Activated CD8-positive, alpha-beta T cell treated with anti-CD3 and anti-CD28 coated beads, Interleukin-2, amount 10 ng/mL, durations not matched to agents 7 days and 5 days (primary cell): ENCODE measurements at regions of chr2 and their contacts with region 1.

Region 1: GRCh38 chr2:219155054-219155644 is 5.5 kb downstream of the NHEJ1 start:
- DNase-seq: peak; percentile 53
- ATAC-seq: no peak
- H3K4me3 Mint-ChIP-seq: no peak overlapping the region
- H3K27ac Mint-ChIP-seq: no peak overlapping the region
- H3K4me1 Mint-ChIP-seq: peaks cover 12% of the 10 kb centered on the region
- H3K27me3 Mint-ChIP-seq: no peaks in the 10 kb centered on the region

Region 2: DNA sequence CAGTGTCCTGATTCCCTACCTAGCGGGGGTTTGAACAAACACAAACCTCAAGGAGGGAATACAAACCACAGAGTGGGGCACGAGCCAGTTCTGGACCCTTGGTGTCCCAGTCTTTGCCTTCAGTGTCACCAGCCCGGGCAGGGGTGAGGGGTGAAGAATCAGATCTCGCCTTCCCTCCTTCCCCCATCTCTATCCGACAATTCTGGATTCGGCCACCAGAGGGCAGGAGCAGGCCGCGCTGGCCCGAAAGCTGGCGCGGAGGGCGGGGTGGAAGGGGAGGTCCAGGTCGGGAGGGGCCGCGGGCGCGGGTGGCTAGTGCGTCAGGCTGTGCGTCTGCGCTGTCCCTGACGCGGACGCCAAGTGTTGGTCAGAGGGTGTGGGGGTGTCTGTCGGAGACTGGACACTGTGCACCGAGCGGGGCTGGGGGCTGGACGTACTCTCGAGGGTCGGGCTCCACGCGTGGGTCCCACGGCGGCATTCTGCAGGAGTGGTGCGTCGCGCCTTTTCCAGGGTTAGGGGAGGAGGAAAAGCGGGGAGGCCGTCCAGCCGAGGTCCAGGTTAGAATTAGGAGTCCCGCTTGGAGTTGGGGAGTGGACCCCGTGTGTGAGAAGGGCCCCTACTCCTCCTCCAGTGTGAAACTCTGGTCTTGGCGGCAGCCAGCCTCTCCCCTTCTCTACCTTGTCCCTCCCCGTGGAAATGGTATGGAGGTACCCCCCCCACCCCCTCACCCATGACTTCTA is 159.0 kb before region 1 on chr2:
- CTCF ChIA-PET with region 1: interaction called, 11 read pairs
- POLR2A ChIA-PET with region 1: no interaction called
- DNase-seq: peak; percentile 81
- ATAC-seq: peak; percentile 61
- H3K4me3 Mint-ChIP-seq: no peak overlapping the region
- H3K27ac Mint-ChIP-seq: no peak overlapping the region
- H3K4me1 Mint-ChIP-seq: peaks cover 8% of the 10 kb centered on the region
- H3K27me3 Mint-ChIP-seq: peaks cover 83% of the 10 kb centered on the region

Region 3: GRCh38 chr2:219029829-219030165 is 125.4 kb before region 1 on chr2:
- CTCF ChIA-PET with region 1: interaction called, 29 read pairs
- POLR2A ChIA-PET with region 1: no interaction called
- DNase-seq: peak; percentile 82
- ATAC-seq: peak; percentile 91
- H3K4me3 Mint-ChIP-seq: no peak overlapping the region
- H3K27ac Mint-ChIP-seq: no peak overlapping the region
- H3K4me1 Mint-ChIP-seq: no peaks in the 10 kb centered on the region
- H3K27me3 Mint-ChIP-seq: peaks cover 22% of the 10 kb centered on the region

Region 4: GRCh38 chr2:219041252-219041651 is 113.9 kb before region 1 on chr2 and contains the start of gene CFAP65:
- CTCF ChIA-PET with region 1: interaction called, 11 read pairs
- POLR2A ChIA-PET with region 1: no interaction called
- DNase-seq: peak; percentile 39
- ATAC-seq: no peak
- H3K4me3 Mint-ChIP-seq: peak within 1 kb of the TSS; percentile 22
- H3K27ac Mint-ChIP-seq: no peak within 1 kb of the TSS
- H3K4me1 Mint-ChIP-seq: peaks cover 9% of the 10 kb centered on the region
- H3K27me3 Mint-ChIP-seq: peaks cover 44% of the 10 kb centered on the region
- total RNA-seq, gene CFAP65: not detected

Region 5: DNA sequence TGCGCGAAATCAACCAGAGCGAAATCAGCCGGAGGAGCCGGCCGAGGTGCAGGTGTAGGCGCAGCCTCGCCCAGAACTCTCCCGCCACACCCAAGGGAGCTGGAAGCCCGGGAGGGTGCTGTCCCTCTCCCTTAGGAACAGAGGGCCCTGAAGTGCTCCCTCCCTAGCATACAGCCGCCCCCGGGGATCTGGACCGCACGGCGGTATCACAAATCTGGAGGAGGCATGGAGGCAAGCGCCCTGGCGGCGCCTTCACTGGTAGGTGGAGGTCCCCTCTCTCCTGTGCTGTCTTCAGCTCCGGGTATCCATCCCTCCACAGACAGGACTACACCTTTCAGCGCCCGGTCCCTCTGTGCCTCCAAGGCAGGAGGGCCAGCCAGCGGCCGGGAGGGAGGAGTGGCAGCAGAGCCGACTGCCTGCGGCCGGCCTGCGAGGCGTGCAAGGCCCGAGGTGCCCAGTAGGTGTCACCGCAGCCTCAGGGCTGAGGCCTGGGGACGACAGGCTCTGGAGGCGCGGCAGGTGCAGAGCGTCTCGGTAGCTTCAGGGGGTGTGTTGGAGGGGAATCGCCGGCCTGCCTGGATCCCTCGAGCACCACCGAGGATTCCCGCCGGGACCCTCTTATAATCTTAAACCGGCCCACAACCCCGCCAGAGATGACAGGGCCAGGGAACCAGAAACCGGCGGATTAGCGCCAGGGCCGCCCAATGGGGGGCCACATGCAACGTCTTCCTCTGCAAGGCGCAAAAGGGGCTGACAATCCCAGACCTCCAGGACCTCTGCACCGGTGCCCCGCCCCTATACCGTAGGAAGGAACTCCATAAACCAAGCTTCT is 97.2 kb before region 1 on chr2:
- CTCF ChIA-PET with region 1: interaction called, 47 read pairs
- POLR2A ChIA-PET with region 1: no interaction called
- DNase-seq: peak; percentile 82
- ATAC-seq: peak; percentile 92
- H3K4me3 Mint-ChIP-seq: peak overlapping the region; percentile 42
- H3K27ac Mint-ChIP-seq: no peak overlapping the region
- H3K4me1 Mint-ChIP-seq: peaks cover 21% of the 10 kb centered on the region
- H3K27me3 Mint-ChIP-seq: peaks cover 62% of the 10 kb centered on the region

Region 6: GRCh38 chr2:219095406-219095935 is 59.7 kb before region 1 on chr2:
- CTCF ChIA-PET with region 1: no interaction called
- POLR2A ChIA-PET with region 1: no interaction called
- DNase-seq: no peak
- ATAC-seq: no peak
- H3K4me3 Mint-ChIP-seq: no peak overlapping the region
- H3K27ac Mint-ChIP-seq: no peak overlapping the region
- H3K4me1 Mint-ChIP-seq: no peaks in the 10 kb centered on the region
- H3K27me3 Mint-ChIP-seq: no peaks in the 10 kb centered on the region

Region 7: DNA sequence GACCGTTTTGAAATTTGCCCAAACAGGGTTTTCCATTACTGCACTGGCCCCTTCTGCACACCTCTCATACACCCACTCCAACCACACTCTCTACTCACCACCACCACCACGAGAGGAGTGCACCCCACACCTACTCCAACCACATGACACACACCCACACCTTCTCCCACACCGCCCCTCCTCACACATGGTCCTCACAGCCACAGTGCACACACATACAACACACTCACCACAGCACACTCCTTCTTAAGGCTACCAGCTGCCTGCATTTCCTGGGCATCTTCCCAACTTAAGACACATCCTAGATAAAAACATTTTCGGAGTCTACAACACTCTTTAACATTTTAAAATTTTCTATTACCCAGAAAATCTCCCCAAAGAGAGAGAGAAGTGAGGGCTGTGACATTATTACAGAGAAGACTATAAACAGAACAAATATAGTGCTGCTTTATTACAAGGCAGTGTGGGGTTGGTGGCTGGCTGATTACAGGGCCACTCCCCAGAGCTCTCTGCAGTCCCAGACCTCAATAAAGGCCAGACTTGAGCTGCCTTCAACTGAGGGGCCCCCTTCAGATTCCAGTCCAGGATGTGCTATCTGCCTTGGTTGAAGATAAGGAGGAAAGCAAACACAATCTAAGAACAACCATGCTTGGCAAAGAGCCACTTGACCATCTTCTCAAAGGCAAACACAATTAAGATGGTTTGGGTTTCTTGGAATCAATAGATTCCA is 30.6 kb before region 1 on chr2:
- CTCF ChIA-PET with region 1: interaction called, 11 read pairs
- POLR2A ChIA-PET with region 1: no interaction called
- DNase-seq: peak; percentile 29
- ATAC-seq: peak; percentile 53
- H3K4me3 Mint-ChIP-seq: no peak overlapping the region
- H3K27ac Mint-ChIP-seq: peak overlapping the region; percentile 21
- H3K4me1 Mint-ChIP-seq: peaks cover 19% of the 10 kb centered on the region
- H3K27me3 Mint-ChIP-seq: no peaks in the 10 kb centered on the region